GM10248 (cell line): ENCODE measurements at regions of chr12 and their contacts with region 1.

Region 1: DNA sequence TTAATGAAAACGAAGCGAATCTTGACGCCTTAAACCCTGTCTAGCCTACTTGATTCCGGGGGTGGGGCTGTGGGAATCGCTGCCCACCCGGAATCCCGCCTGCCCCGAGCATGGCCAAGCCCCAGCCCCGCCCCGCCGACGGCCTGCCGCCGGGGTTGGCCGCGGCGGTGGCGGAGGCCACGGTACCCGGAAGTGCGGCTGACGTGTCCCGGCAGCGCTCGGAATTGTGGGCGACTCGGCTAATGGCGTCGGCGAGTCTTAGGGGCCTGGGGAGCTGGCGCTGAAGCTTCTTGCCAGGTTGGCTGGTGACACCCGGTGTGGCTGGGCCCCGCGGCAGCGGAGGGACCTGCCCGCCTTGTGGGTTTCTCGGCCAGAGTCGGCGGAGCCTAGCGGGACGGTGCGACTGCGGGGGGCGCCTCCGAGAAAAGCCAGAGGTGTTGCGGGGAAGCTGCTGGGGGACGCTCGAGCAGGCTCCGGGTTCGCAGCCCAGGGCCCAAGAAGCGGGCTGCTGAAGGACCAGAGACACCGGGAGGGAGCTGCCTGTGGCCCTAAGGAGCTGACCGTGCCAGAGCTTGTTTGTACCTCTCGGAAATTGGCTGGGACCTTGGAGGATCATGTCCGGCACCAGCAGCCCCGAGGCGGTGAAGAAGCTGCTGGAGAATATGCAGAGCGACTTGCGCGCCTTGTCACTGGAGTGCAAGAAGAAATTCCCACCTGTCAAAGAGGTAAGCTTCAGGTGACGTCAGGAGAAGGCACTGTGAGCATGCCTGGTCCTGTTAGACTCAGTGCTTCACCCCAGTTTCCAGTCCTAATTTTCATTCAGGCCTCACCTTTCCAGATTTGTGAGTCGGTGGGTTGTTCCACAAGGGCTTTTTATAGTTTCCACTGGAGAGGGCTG is at the start of gene MON2:
- DNase-seq: peak; percentile 96
- CTCF ChIP-seq: no peak

Region 2: DNA sequence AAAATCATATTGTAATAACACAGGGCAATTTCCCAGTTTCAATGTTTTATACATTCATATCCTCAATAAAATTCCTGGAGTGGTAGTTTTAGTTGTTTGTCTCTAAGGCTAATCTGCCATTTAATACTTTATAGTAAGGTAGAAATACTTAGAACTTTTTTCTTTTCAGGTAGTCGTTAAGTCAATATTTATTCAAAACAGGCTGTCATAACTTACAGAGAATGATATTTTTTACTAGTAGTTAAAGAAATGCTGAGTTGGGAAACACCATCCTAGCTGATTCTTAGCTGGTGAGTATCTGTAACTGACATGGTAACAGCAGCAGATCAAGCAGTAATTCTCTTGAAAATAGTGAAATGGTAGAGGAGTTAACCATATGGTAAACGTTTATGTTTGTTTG is 33.2 kb after region 1 on chr12:
- CTCF ChIA-PET with region 1: no interaction called
- POLR2A ChIA-PET with region 1: interaction called, 10 read pairs
- DNase-seq: no peak
- CTCF ChIP-seq: no peak